CD8-positive, alpha-beta memory T cell (primary cell): ENCODE measurements at regions of chr3 and their contacts with region 1.

Region 1: GRCh38 chr3:9302425-9303181 is 53.2 kb upstream of the SRGAP3 start:
- DNase-seq: peak; percentile 54 to 79 (median 68)
- H3K4me3 ChIP-seq: no peak overlapping the region
- H3K4me3 Mint-ChIP-seq: peak overlapping the region in 6 of 7 donors; percentile 41 to 77 (median 54)
- H3K27ac ChIP-seq: no peak overlapping the region
- H3K27ac Mint-ChIP-seq: no peak overlapping the region
- H3K4me1 ChIP-seq: peaks cover 4% of the 10 kb centered on the region
- H3K4me1 Mint-ChIP-seq: peaks cover 5 to 12% (median 10%) of the 10 kb centered on the region in 3 donors
- H3K27me3 ChIP-seq: peaks cover 7% of the 10 kb centered on the region
- H3K27me3 Mint-ChIP-seq: peaks cover 17 to 30% of the 10 kb centered on the region in 2 donors

Region 2: DNA sequence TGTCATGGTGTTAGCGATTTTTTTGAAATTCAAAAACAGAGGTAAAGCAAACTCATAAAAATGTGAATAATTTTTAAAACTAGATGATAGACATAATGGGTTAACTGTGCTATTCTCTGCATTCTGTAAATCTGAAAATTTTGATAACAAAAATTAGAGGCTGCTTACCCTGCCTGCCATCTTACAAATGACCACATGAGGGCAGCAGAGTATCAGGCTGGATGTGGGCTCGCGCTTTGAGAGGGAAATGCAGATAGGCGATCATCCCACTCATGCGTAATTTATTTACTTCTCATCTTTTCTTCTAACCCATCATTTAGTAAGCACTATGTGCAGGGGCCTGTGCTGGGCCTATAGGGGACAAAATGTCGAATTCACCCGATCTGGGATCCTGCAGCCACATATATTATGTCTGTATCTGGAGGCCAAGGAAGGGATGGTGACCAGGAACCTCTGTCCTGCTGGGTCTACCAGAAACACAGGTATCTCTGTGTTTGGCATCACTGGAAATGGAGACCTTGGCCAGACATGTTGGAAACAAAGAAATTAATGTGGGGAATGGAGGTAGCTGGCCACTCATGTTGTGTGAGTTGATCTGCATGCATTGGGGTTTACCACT is 331.5 kb before region 1 on chr3:
- CTCF ChIA-PET with region 1: interaction called, 87 read pairs
- POLR2A ChIA-PET with region 1: no interaction called
- DNase-seq: peak; percentile 53 to 80 (median 61)
- H3K4me3 ChIP-seq: no peak overlapping the region
- H3K4me3 Mint-ChIP-seq: peak overlapping the region in 2 of 7 donors; percentile 6 to 44
- H3K27ac ChIP-seq: no peak overlapping the region
- H3K27ac Mint-ChIP-seq: peak overlapping the region in 1 of 8 donors; percentile 61
- H3K4me1 ChIP-seq: peaks cover 4% of the 10 kb centered on the region
- H3K4me1 Mint-ChIP-seq: peaks cover 5 to 6% (median 5%) of the 10 kb centered on the region in 3 donors
- H3K27me3 ChIP-seq: no peaks in the 10 kb centered on the region
- H3K27me3 Mint-ChIP-seq: peaks cover 12 to 17% of the 10 kb centered on the region in 2 donors

Region 3: GRCh38 chr3:8987645-8988383 is 314.8 kb before region 1 on chr3:
- CTCF ChIA-PET with region 1: interaction called, 23 read pairs
- POLR2A ChIA-PET with region 1: no interaction called
- DNase-seq: peak in 4 of 5 donors; percentile 14 to 54 (median 30)
- H3K4me3 ChIP-seq: no peak overlapping the region
- H3K4me3 Mint-ChIP-seq: peak overlapping the region in 3 of 7 donors; percentile 30 to 76 (median 34)
- H3K27ac ChIP-seq: no peak overlapping the region
- H3K27ac Mint-ChIP-seq: peak overlapping the region in 1 of 8 donors; percentile 24
- H3K4me1 ChIP-seq: no peaks in the 10 kb centered on the region
- H3K4me1 Mint-ChIP-seq: peaks cover 2 to 6% (median 4%) of the 10 kb centered on the region in 3 donors
- H3K27me3 ChIP-seq: no peaks in the 10 kb centered on the region
- H3K27me3 Mint-ChIP-seq: no peaks in the 10 kb centered on the region